ENCODE measurements at regions of chr6 and their contacts with region 1.

Region 1: DNA sequence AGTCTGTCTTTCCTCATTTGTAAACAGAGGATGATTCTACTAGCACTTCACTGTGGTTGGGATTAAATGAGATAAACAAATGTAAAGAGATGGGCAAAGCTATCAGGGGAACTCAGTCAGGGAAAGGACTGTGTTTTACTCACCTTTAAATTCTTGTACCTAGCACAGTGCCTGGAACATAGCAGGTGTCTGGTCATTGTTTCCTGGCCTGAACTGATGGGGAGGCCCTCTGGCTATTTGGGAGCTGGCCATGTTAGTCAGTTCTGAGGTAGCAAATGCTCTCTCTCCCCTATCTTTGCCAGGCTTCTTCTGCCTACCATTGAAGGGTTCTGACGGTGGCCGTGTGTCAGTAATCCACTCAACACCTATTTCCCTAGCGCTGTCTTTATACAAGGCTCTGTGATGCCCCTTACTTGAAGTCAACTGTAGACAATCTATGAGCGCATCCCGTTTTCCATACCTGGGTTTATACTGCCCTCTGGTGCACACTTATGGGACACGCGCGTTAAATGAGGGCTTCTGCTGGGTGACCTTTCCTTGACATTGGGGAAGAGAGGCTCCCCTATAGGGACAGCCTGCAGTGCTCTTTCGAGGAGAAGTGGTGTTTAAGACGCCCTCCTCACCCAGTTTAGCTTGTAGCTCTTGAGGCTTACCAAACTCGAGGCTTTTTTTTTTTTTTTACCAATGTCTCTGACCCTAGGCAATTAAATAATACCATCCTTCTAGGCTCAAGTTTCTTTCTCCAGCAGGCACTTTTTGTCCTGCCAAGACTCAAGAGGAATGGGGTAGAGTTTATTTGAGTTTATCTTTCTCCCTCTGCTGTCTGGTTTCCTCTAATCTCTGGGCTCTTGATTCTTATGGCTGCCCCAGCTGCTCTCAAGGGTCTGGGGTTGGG is 4.0 kb upstream of the SPATS1 start:
- DNase-seq: peak; percentile 62
- H3K4me3 ChIP-seq: no peak overlapping the region
- H3K27ac ChIP-seq: peak overlapping the region; percentile 64 to 68
- H3K4me1 ChIP-seq: peaks cover 7% of the 10 kb centered on the region
- H3K27me3 ChIP-seq: no peaks in the 10 kb centered on the region
- CTCF ChIP-seq: peak; percentile 38 to 72 (median 64)
- POLR2A ChIP-seq: no peak

Region 2: GRCh38 chr6:44096612-44097011 is 241.9 kb before region 1 on chr6:
- intact Hi-C with region 1: loop called (anchors 5 kb)
- DNase-seq: peak; percentile 67
- H3K4me3 ChIP-seq: no peak overlapping the region
- H3K27ac ChIP-seq: no peak overlapping the region
- H3K4me1 ChIP-seq: no peaks in the 10 kb centered on the region
- H3K27me3 ChIP-seq: no peaks in the 10 kb centered on the region
- CTCF ChIP-seq: peak; percentile 58 to 89 (median 76)
- POLR2A ChIP-seq: no peak

Region 3: DNA sequence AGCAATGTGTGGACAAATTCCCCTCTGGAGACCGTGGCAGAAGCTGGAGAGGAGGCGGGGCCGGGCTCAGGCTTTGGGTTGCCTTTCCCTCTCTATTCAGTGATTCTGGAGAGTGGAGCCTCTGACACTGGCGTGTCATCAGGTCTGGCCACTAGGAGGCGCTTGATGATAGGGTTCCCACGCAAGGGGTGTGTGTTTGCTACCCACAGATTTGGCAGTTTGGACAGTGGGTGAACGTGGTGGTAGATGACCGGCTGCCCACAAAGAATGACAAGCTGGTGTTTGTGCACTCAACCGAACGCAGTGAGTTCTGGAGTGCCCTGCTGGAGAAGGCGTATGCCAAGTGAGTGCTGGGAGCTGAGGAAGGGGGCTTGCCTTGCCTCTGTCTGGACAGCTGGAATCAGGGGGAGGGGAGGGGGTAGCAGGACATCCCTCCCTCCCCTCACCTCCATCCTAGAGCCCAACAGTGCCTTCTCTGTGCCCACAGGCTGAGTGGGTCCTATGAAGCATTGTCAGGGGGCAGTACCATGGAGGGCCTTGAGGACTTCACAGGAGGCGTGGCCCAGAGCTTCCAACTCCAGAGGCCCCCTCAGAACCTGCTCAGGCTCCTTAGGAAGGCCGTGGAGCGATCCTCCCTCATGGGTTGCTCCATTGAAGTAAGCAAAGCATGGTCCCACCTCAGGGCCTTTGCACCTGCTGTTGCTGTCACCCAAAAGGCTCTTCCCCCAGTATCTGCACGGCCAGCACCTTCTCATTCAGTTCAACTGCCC is 165.6 kb before region 1 on chr6:
- intact Hi-C with region 1: loop called (anchors 10 kb)
- DNase-seq: peak; percentile 81
- H3K4me3 ChIP-seq: no peak overlapping the region
- H3K27ac ChIP-seq: no peak overlapping the region
- H3K4me1 ChIP-seq: no peaks in the 10 kb centered on the region
- H3K27me3 ChIP-seq: no peaks in the 10 kb centered on the region
- CTCF ChIP-seq: peak; percentile 76 to 94 (median 92)
- POLR2A ChIP-seq: no peak

Region 4: GRCh38 chr6:44185953-44186634 is 152.4 kb before region 1 on chr6:
- intact Hi-C with region 1: no loop called
- DNase-seq: no peak
- H3K4me3 ChIP-seq: no peak overlapping the region
- H3K27ac ChIP-seq: no peak overlapping the region
- H3K4me1 ChIP-seq: no peaks in the 10 kb centered on the region
- H3K27me3 ChIP-seq: no peaks in the 10 kb centered on the region
- CTCF ChIP-seq: no peak
- POLR2A ChIP-seq: no peak

Region 5: DNA sequence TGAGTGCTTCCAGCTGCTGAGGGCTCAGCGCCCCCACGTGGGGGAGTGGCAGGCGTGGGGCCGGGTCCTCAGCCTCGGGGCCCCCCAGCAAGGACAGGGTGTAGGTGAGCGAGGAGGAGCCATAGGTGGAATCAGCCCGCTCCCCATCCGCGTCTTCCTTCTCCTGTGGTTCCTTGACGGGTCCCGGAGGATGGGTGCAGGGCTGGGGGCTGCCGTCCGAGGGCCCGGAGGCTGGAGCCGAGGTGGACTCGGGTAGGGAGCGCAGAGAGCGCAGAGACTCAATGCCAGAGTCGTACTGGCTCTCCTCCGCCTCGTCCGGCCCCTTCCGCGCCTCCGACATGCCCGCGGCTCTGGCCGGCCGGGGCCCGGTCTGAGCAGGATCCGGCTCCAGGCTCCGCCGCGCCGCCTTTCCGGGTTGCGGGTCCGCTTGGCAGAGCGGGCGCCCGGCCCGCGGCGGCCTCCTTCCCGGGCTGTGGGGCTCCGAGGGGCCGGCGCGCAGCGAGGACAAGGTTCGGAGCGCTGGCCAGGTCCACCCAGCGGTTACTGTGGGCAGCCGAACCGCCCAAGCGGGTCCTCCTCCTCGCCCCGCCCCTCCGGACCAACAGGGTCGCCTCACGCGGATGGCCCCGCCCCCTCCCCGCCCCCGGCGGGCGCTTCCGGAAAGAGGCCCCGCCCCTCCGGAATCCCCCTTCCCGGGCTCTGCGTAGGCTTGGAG is 73.3 kb before region 1 on chr6 and contains the start of gene NFKBIE:
- intact Hi-C with region 1: loop called (anchors 2 kb)
- DNase-seq: peak; percentile 95
- H3K4me3 ChIP-seq: peak within 1 kb of the TSS; percentile 51 to 73
- H3K27ac ChIP-seq: peak within 1 kb of the TSS; percentile 67 to 72
- H3K4me1 ChIP-seq: peaks cover 12% of the 10 kb centered on the region
- H3K27me3 ChIP-seq: no peaks in the 10 kb centered on the region
- CTCF ChIP-seq: peak in 2 of 4 experiments; percentile 40 to 47
- POLR2A ChIP-seq: peak; percentile 97
- total RNA-seq, gene NFKBIE: 20.8 to 34.4 TPM

Region 6: DNA sequence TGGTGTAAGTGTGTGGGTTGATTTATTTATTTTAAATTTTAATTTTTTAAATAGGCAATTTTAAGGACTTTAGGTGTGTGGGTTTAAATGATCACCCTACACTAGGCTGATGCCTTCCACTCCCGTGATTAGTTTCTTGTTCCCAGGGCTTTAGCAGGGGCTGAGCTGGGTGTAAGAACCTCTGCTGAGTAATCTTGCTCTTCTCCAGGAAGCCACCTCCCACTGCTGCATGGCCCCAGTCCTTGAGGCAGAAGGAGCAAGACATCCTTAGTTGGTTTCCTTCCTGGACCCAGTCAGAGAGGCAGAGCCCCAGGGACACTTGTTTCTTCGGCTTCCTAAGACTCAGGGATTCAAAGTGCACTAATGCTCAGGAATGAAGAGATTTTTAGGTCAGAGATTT is 29.2 kb after region 1 on chr6:
- intact Hi-C with region 1: no loop called
- DNase-seq: no peak
- H3K4me3 ChIP-seq: no peak overlapping the region
- H3K27ac ChIP-seq: no peak overlapping the region
- H3K4me1 ChIP-seq: no peaks in the 10 kb centered on the region
- H3K27me3 ChIP-seq: no peaks in the 10 kb centered on the region
- CTCF ChIP-seq: no peak
- POLR2A ChIP-seq: no peak